ENCODE measurements at regions of chr3 and their contacts with region 1.

Region 1: GRCh38 chr3:108090701-108091451 is at the start of gene CD47:
- DNase-seq: peak; percentile 94 to 98
- ATAC-seq: peak; percentile 92 to 98 (median 96)
- H3K4me3 ChIP-seq: peak within 1 kb of the TSS; percentile 73 to 97 (median 94)
- H3K27ac ChIP-seq: peak within 1 kb of the TSS; percentile 19 to 99 (median 92)
- H3K4me1 ChIP-seq: peaks cover 0 to 47% (median 32%) of the 10 kb centered on the region in 9 donors
- H3K27me3 ChIP-seq: no peaks in the 10 kb centered on the region
- CTCF ChIP-seq: peak in 1 of 9 donors; percentile 11
- total RNA-seq, gene CD47: 36.3 to 76.3 (median 51.2) TPM

Region 2: DNA sequence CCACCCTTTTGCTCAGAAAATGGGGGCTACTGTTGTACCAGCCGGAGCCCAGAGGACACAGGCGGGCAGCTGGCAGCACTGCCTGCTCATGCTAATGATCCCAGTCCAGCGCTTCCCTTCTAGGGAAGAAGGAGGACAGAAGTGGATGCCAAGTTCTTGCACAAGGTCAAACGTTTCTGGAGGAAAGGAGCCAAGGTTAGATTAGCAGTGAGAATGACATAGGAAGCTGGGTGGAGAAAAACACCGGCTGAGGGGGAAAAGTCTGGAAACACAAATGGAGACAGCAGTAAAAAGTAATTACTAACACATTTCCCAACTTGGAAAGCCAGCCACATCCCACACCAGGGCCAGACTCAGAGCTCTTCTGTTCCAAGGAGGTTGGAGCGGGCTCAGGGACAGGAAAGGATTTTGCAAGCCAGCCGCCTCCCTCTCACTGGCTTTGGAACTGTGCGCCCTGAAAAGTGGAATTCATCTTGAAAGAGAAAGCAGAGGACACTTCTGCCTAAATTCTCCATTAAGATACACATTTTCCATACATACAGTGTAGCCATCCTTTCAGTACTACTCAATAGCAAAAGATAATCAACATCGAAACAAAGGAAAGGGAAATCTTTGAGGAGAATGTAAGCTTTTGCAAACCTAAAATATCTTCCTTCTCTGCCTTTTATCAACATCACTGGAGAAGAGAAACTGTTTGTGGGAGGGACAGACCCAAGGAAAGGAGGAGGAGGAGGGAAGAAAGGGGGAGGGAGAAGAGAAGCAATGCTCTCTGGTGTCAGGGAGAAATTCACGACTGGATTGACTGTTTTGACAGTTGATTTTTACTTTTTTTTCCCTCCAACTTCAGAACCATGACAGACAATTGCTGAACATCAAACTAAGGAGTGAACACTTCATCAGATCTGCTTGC is 133.6 kb before region 1 on chr3:
- intact Hi-C with region 1: loop called in 2 of 10 experiments (anchors 10 kb)
- DNase-seq: peak; percentile 69 to 81
- ATAC-seq: peak; percentile 89 to 96 (median 94)
- H3K4me3 ChIP-seq: peak overlapping the region in 7 of 10 donors; percentile 8 to 33 (median 26)
- H3K27ac ChIP-seq: peak overlapping the region; percentile 63 to 86 (median 71)
- H3K4me1 ChIP-seq: peaks cover 0 to 40% (median 24%) of the 10 kb centered on the region in 9 donors
- H3K27me3 ChIP-seq: no peaks in the 10 kb centered on the region
- CTCF ChIP-seq: no peak

Region 3: DNA sequence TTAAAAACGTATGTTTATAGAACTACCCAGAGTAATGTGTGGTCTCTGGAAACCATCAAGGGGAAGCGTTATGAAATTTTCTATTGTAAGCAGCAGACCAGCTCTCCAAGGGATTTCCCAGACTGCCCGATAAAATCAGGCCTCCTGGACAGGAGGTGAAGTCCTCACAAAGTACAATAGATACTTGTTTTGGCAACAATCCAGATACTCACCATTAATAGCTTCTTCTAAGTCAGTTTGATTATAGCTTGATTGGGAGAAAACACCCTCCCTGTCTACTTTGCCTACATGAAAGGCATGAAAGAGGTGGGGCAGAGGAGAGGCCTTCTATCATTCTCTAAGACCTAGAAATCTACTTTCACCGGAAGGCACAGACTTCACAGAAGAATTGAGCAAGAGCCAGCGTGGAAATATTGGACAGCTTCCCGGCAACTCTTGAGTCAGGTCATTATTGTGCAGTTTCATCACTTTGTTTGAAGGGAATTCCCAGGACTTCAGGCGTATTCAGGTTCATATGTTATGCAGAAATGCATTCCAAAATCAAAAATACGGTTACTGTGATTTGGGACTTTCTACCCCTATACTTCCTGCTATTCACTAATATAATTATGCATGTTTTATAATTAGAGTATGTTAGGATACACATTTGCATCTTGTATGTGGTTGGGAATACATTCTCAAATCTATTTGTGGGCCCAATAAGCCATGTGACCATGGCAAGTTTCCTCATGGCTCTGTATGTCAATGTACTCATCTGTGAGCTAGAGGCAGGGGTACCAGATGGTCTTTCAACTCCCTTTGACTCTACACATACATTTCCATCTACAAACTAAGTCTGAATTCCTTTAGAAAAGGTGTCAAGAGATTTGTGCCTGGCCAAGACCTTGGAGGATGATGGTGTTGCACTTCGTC is 103.6 kb before region 1 on chr3:
- intact Hi-C with region 1: loop called in 1 of 10 experiments (anchors 2 kb)
- DNase-seq: peak; percentile 50 to 85
- ATAC-seq: peak; percentile 78 to 91 (median 88)
- H3K4me3 ChIP-seq: no peak overlapping the region
- H3K27ac ChIP-seq: peak overlapping the region in 8 of 10 donors; percentile 5 to 71 (median 46)
- H3K4me1 ChIP-seq: peaks cover 4 to 57% (median 30%) of the 10 kb centered on the region in 9 donors
- H3K27me3 ChIP-seq: no peaks in the 10 kb centered on the region
- CTCF ChIP-seq: no peak

Region 4: GRCh38 chr3:108281670-108282069 is 190.8 kb after region 1 on chr3:
- intact Hi-C with region 1: no loop called
- DNase-seq: no peak
- ATAC-seq: no peak
- H3K4me3 ChIP-seq: no peak overlapping the region
- H3K27ac ChIP-seq: no peak overlapping the region
- H3K4me1 ChIP-seq: no peaks in the 10 kb centered on the region
- H3K27me3 ChIP-seq: no peaks in the 10 kb centered on the region
- CTCF ChIP-seq: no peak

Measured in heart right ventricle (tissue), 16 donors.